Naive thymus-derived CD4-positive, alpha-beta T cell (primary cell): ENCODE measurements at regions of chr10 and their contacts with region 1.

Region 1: DNA sequence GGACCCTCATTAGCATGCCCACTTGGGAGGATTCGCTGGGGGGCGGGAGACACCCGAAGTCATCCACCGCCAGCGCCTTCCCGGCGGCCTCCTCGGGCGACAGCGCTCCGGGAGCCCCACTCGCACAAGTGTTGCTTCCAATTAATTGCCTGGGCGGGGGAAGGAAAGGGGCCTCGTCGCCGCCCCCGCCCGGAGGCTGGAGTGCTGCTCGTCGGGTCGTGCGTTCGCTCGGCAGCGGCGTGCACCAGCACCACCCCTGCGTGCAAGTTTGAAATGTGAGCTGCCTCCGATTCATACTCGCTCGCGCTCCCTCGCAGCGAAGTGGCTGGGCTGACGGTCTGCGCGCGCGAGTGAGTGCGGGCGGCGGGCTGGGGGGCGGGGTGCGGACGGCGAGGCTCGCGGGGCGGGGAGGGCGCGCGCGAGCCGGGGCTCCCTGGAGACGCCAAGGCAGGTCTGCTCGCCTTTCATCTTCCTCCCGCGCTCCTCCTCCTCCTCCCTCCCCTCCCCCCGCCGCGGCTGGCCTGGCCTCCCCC is 104.6 kb upstream of the PPIF start:
- DNase-seq: peak; percentile 6 to 71 (median 35)
- ATAC-seq: peak; percentile 39
- H3K4me3 ChIP-seq: peak overlapping the region; percentile 37
- H3K4me3 Mint-ChIP-seq: peak overlapping the region; percentile 43 to 87 (median 77)
- H3K27ac ChIP-seq: no peak overlapping the region
- H3K27ac Mint-ChIP-seq: peak overlapping the region in 1 of 9 donors; percentile 80
- H3K4me1 ChIP-seq: peaks cover 27 to 38% of the 10 kb centered on the region in 2 donors
- H3K4me1 Mint-ChIP-seq: peaks cover 39 to 58% (median 41%) of the 10 kb centered on the region in 7 donors
- H3K27me3 ChIP-seq: no peaks in the 10 kb centered on the region
- H3K27me3 Mint-ChIP-seq: no peaks in the 10 kb centered on the region

Region 2: GRCh38 chr10:78029269-78030226 is 1213.1 kb before region 1 on chr10 and contains the start of gene POLR3A:
- CTCF ChIA-PET with region 1: interaction called, 3 read pairs
- POLR2A ChIA-PET with region 1: no interaction called
- intact Hi-C with region 1: loop called (anchors 2 kb)
- DNase-seq: peak; percentile 79 to 94 (median 90)
- ATAC-seq: peak; percentile 77
- H3K4me3 ChIP-seq: peak within 1 kb of the TSS; percentile 99
- H3K4me3 Mint-ChIP-seq: peak within 1 kb of the TSS; percentile 92 to 100 (median 99)
- H3K27ac ChIP-seq: peak within 1 kb of the TSS; percentile 89
- H3K27ac Mint-ChIP-seq: peak within 1 kb of the TSS; percentile 88 to 99 (median 95)
- H3K4me1 ChIP-seq: peaks cover 12 to 19% of the 10 kb centered on the region in 2 donors
- H3K4me1 Mint-ChIP-seq: peaks cover 22 to 50% (median 37%) of the 10 kb centered on the region in 7 donors
- H3K27me3 ChIP-seq: no peaks in the 10 kb centered on the region
- H3K27me3 Mint-ChIP-seq: no peaks in the 10 kb centered on the region
- total RNA-seq, gene POLR3A: 12.0 to 20.9 (median 19.0) TPM

Region 3: DNA sequence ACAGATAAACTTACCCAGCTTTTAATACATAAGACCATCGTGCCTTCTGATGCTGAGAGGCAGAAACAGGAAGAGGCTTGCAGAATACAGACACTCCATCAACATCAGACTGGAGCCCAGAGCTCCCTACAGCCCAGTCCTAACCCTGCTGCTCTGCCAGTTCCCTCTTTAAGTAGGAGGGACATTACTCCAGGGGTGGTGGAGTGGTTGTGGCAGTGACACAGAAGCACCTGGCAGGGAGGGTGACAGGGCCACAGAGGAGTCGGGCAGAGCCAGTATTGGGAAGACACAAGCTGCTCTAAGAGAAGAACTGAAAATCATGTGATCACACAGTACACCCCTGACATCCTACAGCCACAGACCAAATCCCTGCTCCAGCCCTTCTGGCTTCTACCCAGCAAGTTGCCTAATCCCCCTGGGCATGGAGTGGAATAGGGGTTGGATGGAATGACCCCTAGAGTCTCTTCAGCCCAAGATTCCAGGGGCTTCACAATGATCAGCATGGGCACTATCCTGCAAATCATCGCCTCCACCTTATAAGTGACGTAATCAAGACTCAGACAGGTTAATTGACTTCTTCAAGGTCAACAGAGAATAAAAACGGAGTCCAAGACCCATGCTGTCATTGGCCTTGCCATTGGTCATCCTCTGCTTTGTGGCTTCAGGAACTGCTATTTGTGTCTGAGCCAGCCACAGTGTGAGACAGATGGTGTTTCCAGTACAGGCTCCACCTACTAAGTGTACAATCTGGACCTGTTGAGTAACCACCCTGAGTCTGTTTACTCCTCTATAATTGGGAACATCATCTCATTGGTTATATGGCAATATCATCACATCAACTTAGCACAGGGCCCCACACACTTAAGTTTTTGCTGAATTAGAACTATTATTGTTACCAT is 235.0 kb before region 1 on chr10:
- CTCF ChIA-PET with region 1: no interaction called
- POLR2A ChIA-PET with region 1: no interaction called
- intact Hi-C with region 1: no loop called
- DNase-seq: peak in 2 of 9 donors; percentile 16 to 20
- ATAC-seq: peak; percentile 55
- H3K4me3 ChIP-seq: no peak overlapping the region
- H3K4me3 Mint-ChIP-seq: no peak overlapping the region
- H3K27ac ChIP-seq: no peak overlapping the region
- H3K27ac Mint-ChIP-seq: peak overlapping the region in 4 of 9 donors; percentile 7 to 68 (median 38)
- H3K4me1 ChIP-seq: no peaks in the 10 kb centered on the region
- H3K4me1 Mint-ChIP-seq: peaks cover 3 to 19% (median 11%) of the 10 kb centered on the region in 7 donors
- H3K27me3 ChIP-seq: no peaks in the 10 kb centered on the region
- H3K27me3 Mint-ChIP-seq: peaks cover 0 to 20% (median 0%) of the 10 kb centered on the region in 5 donors

Region 4: GRCh38 chr10:79259834-79260233 is 17.1 kb after region 1 on chr10:
- CTCF ChIA-PET with region 1: no interaction called
- POLR2A ChIA-PET with region 1: no interaction called
- intact Hi-C with region 1: loop called in 1 of 2 experiments (anchors 2 kb)
- DNase-seq: no peak
- ATAC-seq: no peak
- H3K4me3 ChIP-seq: no peak overlapping the region
- H3K4me3 Mint-ChIP-seq: no peak overlapping the region
- H3K27ac ChIP-seq: no peak overlapping the region
- H3K27ac Mint-ChIP-seq: peak overlapping the region in 1 of 9 donors; percentile 39
- H3K4me1 ChIP-seq: no peaks in the 10 kb centered on the region
- H3K4me1 Mint-ChIP-seq: peaks cover 0 to 30% (median 9%) of the 10 kb centered on the region in 7 donors
- H3K27me3 ChIP-seq: no peaks in the 10 kb centered on the region
- H3K27me3 Mint-ChIP-seq: no peaks in the 10 kb centered on the region

Region 5: GRCh38 chr10:79316671-79317431 is 74.2 kb after region 1 on chr10:
- CTCF ChIA-PET with region 1: interaction called, 3 read pairs
- POLR2A ChIA-PET with region 1: no interaction called
- intact Hi-C with region 1: loop called (anchors 2 kb)
- DNase-seq: peak in 1 of 9 donors; percentile 12
- ATAC-seq: peak; percentile 13
- H3K4me3 ChIP-seq: peak overlapping the region; percentile 9
- H3K4me3 Mint-ChIP-seq: peak overlapping the region in 9 of 10 donors; percentile 32 to 86 (median 65)
- H3K27ac ChIP-seq: no peak overlapping the region
- H3K27ac Mint-ChIP-seq: peak overlapping the region in 6 of 9 donors; percentile 31 to 95 (median 88)
- H3K4me1 ChIP-seq: peaks cover 39 to 54% of the 10 kb centered on the region in 2 donors
- H3K4me1 Mint-ChIP-seq: peaks cover 53 to 62% (median 60%) of the 10 kb centered on the region in 7 donors
- H3K27me3 ChIP-seq: no peaks in the 10 kb centered on the region
- H3K27me3 Mint-ChIP-seq: peaks cover 0 to 4% (median 0%) of the 10 kb centered on the region in 5 donors

Region 6: GRCh38 chr10:79322616-79323543 is 80.2 kb after region 1 on chr10:
- CTCF ChIA-PET with region 1: interaction called, 3 read pairs
- POLR2A ChIA-PET with region 1: no interaction called
- intact Hi-C with region 1: loop called (anchors 2 kb)
- DNase-seq: peak; percentile 53 to 92 (median 90)
- ATAC-seq: peak; percentile 90
- H3K4me3 ChIP-seq: peak overlapping the region; percentile 20
- H3K4me3 Mint-ChIP-seq: peak overlapping the region; percentile 70 to 88 (median 80)
- H3K27ac ChIP-seq: peak overlapping the region; percentile 65
- H3K27ac Mint-ChIP-seq: peak overlapping the region; percentile 77 to 99 (median 94)
- H3K4me1 ChIP-seq: peaks cover 58 to 63% of the 10 kb centered on the region in 2 donors
- H3K4me1 Mint-ChIP-seq: peaks cover 50 to 74% (median 68%) of the 10 kb centered on the region in 7 donors
- H3K27me3 ChIP-seq: no peaks in the 10 kb centered on the region
- H3K27me3 Mint-ChIP-seq: no peaks in the 10 kb centered on the region